Heart right ventricle (tissue), 16 donors: ENCODE measurements at regions of chr9 and their contacts with region 1.

Region 1: DNA sequence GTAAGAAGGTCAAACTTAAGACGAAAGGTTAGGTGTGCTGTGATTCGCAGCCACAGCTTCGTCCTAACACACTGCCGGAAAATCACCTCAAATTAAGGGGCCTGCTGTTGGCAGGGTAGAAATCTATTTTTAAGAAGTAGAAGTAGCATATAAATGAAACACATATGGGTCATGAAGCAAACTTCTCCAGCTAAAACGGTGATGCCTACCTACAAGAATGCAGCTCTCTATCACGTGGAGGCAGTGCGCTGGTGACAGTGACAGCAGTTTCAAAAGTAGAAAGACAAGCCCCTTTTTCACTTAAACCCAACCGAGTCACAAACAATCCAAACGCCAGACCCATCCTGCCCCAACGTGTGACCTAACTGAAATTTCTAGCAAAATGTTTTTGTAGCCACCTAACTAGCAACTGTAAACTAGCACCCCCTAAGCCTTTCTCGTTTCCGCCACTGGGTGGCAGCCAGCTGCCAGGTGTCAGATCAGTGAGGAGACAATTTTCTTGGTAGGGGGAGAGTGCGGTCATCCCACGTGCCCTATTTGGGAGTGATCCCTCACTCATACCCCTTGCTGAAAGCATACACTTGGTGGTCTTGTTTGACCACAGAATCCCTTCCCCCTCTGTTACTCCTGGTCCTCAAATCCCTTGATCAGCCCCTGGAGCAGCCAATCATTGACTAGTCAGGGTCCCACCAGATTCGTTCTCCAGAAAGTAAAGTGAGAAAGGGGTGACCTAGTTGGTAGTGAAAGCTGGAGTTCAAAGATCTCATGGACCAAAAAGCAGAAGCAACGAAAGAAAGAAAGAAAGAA is 71.8 kb upstream of the MAMDC2 start:
- DNase-seq: peak; percentile 63 to 75
- ATAC-seq: peak; percentile 68 to 83 (median 74)
- H3K4me3 ChIP-seq: no peak overlapping the region
- H3K27ac ChIP-seq: no peak overlapping the region
- H3K4me1 ChIP-seq: peaks cover 0 to 13% (median 0%) of the 10 kb centered on the region in 9 donors
- H3K27me3 ChIP-seq: no peaks in the 10 kb centered on the region
- CTCF ChIP-seq: peak; percentile 73 to 91 (median 83)

Region 2: DNA sequence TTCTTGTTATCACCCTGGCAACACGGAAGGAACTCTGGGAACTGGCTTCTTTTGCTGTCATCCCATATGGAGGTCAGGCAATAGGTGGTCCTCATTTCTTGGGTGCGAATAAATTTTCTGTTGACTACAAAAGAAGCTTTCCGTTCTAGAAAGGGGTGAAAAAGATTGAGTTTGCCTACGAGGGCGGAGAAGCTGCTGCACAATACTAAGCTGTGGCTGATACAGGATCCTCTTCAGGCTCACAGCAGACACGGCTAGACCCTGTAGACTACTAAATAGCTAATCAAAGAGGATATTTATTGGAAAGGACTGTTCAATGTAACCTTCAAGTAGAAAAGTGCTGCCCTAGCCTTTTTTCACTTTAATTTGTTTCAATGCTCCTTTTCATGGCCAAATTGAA is 739.7 kb before region 1 on chr9:
- intact Hi-C with region 1: no loop called
- DNase-seq: no peak
- ATAC-seq: peak in 3 of 8 donors; percentile 18 to 49 (median 32)
- H3K4me3 ChIP-seq: no peak overlapping the region
- H3K27ac ChIP-seq: peak overlapping the region in 3 of 10 donors; percentile 35 to 37 (median 37)
- H3K4me1 ChIP-seq: peaks cover 0 to 20% (median 0%) of the 10 kb centered on the region in 9 donors
- H3K27me3 ChIP-seq: no peaks in the 10 kb centered on the region
- CTCF ChIP-seq: no peak

Region 3: DNA sequence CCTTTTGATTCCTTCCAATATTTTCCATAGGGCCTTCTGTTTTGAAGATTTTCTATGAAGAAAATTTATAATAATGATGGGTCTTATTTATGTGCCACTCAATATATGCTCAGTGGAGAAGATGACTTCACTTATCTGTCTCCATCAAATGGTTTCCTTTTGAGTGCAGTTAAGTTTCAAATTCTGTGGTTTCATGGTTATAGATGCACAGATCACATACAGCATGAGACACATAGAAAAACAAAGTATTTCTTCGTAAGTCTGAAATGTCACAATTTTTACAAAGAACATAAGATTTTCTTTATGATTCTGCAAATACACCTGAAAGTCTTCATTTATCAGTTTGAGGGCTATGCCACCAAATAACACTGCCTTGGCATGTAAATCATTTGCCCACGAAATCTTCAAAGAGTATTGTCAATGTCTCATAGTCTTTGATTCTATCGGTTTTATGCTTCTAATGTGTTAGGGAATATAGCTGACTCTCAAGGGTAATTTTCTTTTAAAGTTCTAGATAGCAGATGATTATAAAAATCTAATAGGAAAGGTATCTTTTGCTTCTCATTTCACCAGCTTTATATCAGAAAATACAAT is 137.2 kb before region 1 on chr9:
- intact Hi-C with region 1: no loop called
- DNase-seq: no peak
- ATAC-seq: no peak
- H3K4me3 ChIP-seq: no peak overlapping the region
- H3K27ac ChIP-seq: no peak overlapping the region
- H3K4me1 ChIP-seq: no peaks in the 10 kb centered on the region
- H3K27me3 ChIP-seq: no peaks in the 10 kb centered on the region
- CTCF ChIP-seq: no peak

Region 4: DNA sequence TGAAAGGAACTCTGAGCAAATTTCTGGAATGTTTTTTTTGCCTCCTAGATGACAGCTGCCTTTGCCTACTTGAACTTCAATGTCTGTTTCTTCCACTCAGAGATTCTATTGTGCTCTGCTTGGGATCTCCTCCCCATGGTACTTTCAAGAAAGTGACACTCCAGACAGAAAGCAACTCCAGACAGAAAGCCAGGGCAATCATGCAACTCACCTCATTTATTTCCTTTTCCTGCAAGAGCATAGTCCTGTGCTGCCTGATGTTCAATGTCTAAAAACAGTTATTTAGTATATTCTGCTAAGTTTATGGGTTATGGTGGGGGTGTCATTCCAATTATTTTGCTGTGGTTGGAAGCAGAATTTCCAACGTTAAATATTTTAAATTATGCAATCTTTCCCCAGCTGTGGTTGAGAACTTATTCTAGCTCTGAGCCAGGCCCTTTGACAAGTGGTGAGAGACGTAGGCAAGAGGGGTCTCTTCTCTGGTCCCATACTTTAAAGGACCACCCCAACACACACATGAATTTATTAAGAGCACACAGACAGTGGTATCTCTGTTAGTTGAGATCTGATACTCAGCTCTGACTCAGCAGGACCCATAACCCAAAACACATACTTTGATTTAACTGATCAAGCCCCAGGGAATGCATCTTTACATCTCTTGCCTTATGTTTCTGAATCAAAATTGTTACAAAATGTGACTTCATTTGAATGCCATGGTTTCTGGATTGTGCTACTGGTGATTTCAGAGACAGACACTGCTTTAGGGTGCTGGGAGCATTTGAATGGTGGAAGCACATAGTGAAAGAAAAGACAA is 32.3 kb after region 1 on chr9:
- intact Hi-C with region 1: no loop called
- DNase-seq: no peak
- ATAC-seq: no peak
- H3K4me3 ChIP-seq: no peak overlapping the region
- H3K27ac ChIP-seq: no peak overlapping the region
- H3K4me1 ChIP-seq: no peaks in the 10 kb centered on the region
- H3K27me3 ChIP-seq: no peaks in the 10 kb centered on the region
- CTCF ChIP-seq: no peak

Region 5: GRCh38 chr9:70111042-70111602 is 139.3 kb after region 1 on chr9:
- intact Hi-C with region 1: loop called (anchors 1 to 5 kb)
- DNase-seq: peak; percentile 79 to 86
- ATAC-seq: peak in 7 of 8 donors; percentile 74 to 87 (median 81)
- H3K4me3 ChIP-seq: no peak overlapping the region
- H3K27ac ChIP-seq: peak overlapping the region in 5 of 10 donors; percentile 1 to 54 (median 13)
- H3K4me1 ChIP-seq: peaks cover 0 to 19% (median 8%) of the 10 kb centered on the region in 9 donors
- H3K27me3 ChIP-seq: no peaks in the 10 kb centered on the region
- CTCF ChIP-seq: peak; percentile 64 to 93 (median 86)

Region 6: DNA sequence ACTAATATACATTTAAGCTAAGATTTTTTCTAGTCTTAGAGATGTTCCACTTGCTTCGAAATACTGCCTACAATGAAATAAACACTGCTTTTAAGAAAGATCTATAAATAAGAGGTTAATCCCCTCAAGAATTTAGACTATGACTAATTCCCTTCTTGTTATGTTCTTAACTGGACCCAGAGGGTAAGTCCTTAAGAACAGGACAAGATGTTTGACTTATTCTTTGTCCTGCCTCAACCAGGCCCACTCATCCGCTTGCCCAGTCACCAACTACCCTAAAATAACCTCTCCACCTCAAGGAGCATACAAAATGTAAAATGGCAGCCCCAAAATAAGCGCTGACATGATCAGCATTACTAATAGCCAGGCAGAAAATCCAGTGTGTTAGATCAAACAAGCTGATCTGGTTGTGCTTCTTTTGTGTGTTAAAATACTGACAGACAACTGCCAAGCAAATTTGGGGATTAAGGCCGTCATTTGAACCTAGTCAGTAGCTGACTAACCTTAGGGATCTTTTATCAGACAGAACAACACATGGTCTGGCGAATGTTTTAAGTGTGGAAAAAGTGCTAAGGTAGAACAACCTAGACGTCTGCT is 193.3 kb after region 1 on chr9:
- intact Hi-C with region 1: loop called in 1 of 10 experiments (anchors 1 kb)
- DNase-seq: no peak
- ATAC-seq: no peak
- H3K4me3 ChIP-seq: no peak overlapping the region
- H3K27ac ChIP-seq: no peak overlapping the region
- H3K4me1 ChIP-seq: peaks cover 0 to 15% (median 8%) of the 10 kb centered on the region in 9 donors
- H3K27me3 ChIP-seq: no peaks in the 10 kb centered on the region
- CTCF ChIP-seq: no peak

Region 7: GRCh38 chr9:70229579-70229978 is 257.7 kb after region 1 on chr9:
- intact Hi-C with region 1: loop called in 9 of 10 experiments (anchors 2 to 10 kb)
- DNase-seq: no peak
- ATAC-seq: peak in 4 of 8 donors; percentile 20 to 60 (median 42)
- H3K4me3 ChIP-seq: peak overlapping the region in 2 of 10 donors; percentile 16 to 21
- H3K27ac ChIP-seq: peak overlapping the region in 4 of 10 donors; percentile 2 to 64 (median 42)
- H3K4me1 ChIP-seq: peaks cover 0 to 19% (median 8%) of the 10 kb centered on the region in 9 donors
- H3K27me3 ChIP-seq: no peaks in the 10 kb centered on the region
- CTCF ChIP-seq: peak in 6 of 9 donors; percentile 7 to 55 (median 42)

Region 8: GRCh38 chr9:71072587-71072986 is 1100.7 kb after region 1 on chr9:
- intact Hi-C with region 1: no loop called
- DNase-seq: no peak
- ATAC-seq: no peak
- H3K4me3 ChIP-seq: no peak overlapping the region
- H3K27ac ChIP-seq: no peak overlapping the region
- H3K4me1 ChIP-seq: no peaks in the 10 kb centered on the region
- H3K27me3 ChIP-seq: no peaks in the 10 kb centered on the region
- CTCF ChIP-seq: no peak